ENCODE measurements at regions of chr13 and their contacts with region 1.

Region 1: GRCh38 chr13:114128624-114129522 is 3.5 kb downstream of the RASA3 start:
- DNase-seq: peak; percentile 85 to 93 (median 92)
- ATAC-seq: peak; percentile 62 to 85
- H3K4me3 ChIP-seq: no peak overlapping the region
- H3K27ac ChIP-seq: peak overlapping the region; percentile 13
- H3K4me1 ChIP-seq: peaks cover 16% of the 10 kb centered on the region
- H3K27me3 ChIP-seq: no peaks in the 10 kb centered on the region

Region 2: GRCh38 chr13:112908342-112908741 is 1220.5 kb before region 1 on chr13:
- intact Hi-C with region 1: no loop called
- DNase-seq: no peak
- ATAC-seq: no peak
- H3K4me3 ChIP-seq: no peak overlapping the region
- H3K27ac ChIP-seq: no peak overlapping the region
- H3K4me1 ChIP-seq: no peaks in the 10 kb centered on the region
- H3K27me3 ChIP-seq: no peaks in the 10 kb centered on the region

Region 3: GRCh38 chr13:113724016-113724758 is 404.7 kb before region 1 on chr13:
- intact Hi-C with region 1: no loop called
- DNase-seq: peak in 1 of 3 donors; percentile 44
- ATAC-seq: peak; percentile 9 to 28
- H3K4me3 ChIP-seq: no peak overlapping the region
- H3K27ac ChIP-seq: peak overlapping the region; percentile 78
- H3K4me1 ChIP-seq: no peaks in the 10 kb centered on the region
- H3K27me3 ChIP-seq: no peaks in the 10 kb centered on the region

Region 4: GRCh38 chr13:114065141-114065925 is 63.5 kb before region 1 on chr13:
- intact Hi-C with region 1: loop called in 1 of 4 experiments (anchors 10 kb)
- DNase-seq: peak; percentile 91 to 94 (median 94)
- ATAC-seq: peak; percentile 92 to 93
- H3K4me3 ChIP-seq: no peak overlapping the region
- H3K27ac ChIP-seq: peak overlapping the region; percentile 79
- H3K4me1 ChIP-seq: peaks cover 4% of the 10 kb centered on the region
- H3K27me3 ChIP-seq: no peaks in the 10 kb centered on the region